H1 (cell line): ENCODE measurements at regions of chr13 and their contacts with region 1.

Region 1: GRCh38 chr13:46492946-46493345 is 60.0 kb upstream of the LRCH1 start:
- DNase-seq: no peak
- H3K4me3 ChIP-seq: no peak overlapping the region
- H3K27ac ChIP-seq: no peak overlapping the region
- H3K4me1 ChIP-seq: no peaks in the 10 kb centered on the region
- H3K27me3 ChIP-seq: no peaks in the 10 kb centered on the region
- CTCF ChIP-seq: peak in 2 of 3 experiments; percentile 57 to 61; a peak in 2 of 4 replicates
- EP300 ChIP-seq: no peak
- POLR2A ChIP-seq: no peak
- RAD21 ChIP-seq: peak; percentile 83 to 86

Region 2: GRCh38 chr13:46463719-46464118 is 29.2 kb before region 1 on chr13:
- CTCF ChIA-PET with region 1: no interaction called
- POLR2A ChIA-PET with region 1: no interaction called
- DNase-seq: no peak
- H3K4me3 ChIP-seq: no peak overlapping the region
- H3K27ac ChIP-seq: no peak overlapping the region
- H3K4me1 ChIP-seq: no peaks in the 10 kb centered on the region
- H3K27me3 ChIP-seq: no peaks in the 10 kb centered on the region
- CTCF ChIP-seq: no peak
- EP300 ChIP-seq: no peak
- POLR2A ChIP-seq: no peak
- RAD21 ChIP-seq: no peak

Region 3: DNA sequence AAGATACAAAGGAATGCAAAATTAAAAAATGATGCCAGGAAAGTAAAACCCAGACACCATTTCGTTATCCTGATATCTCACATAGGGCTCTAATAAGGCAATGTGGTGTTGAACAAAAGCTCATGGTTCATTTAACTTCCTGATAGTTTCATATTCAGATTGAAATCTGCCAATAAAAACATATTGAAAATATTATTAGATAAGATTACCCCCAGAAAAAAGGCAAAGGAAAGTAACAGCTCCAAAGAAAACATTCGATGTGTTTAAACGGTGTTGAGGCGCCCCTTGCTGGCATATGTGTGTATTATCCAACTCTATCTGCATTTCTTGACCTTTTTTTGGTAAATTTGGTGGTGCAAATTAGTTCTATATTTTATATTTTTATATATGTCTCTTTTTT is 228.1 kb after region 1 on chr13:
- CTCF ChIA-PET with region 1: interaction called, 36 read pairs
- POLR2A ChIA-PET with region 1: interaction called, 3 read pairs
- DNase-seq: no peak
- H3K4me3 ChIP-seq: no peak overlapping the region
- H3K27ac ChIP-seq: no peak overlapping the region
- H3K4me1 ChIP-seq: no peaks in the 10 kb centered on the region
- H3K27me3 ChIP-seq: no peaks in the 10 kb centered on the region
- CTCF ChIP-seq: peak in 2 of 3 experiments; percentile 56 to 68; a peak in 3 of 4 replicates
- EP300 ChIP-seq: no peak
- POLR2A ChIP-seq: no peak
- RAD21 ChIP-seq: peak; percentile 83 to 84